ENCODE measurements at regions of chr2 and their contacts with region 1.

Region 1: GRCh38 chr2:72619626-72620025 is 206.2 kb downstream of the EXOC6B start:
- DNase-seq: peak; percentile 67
- H3K4me3 ChIP-seq: no peak overlapping the region
- H3K27ac ChIP-seq: no peak overlapping the region
- H3K4me1 ChIP-seq: no peaks in the 10 kb centered on the region
- H3K27me3 ChIP-seq: no peaks in the 10 kb centered on the region
- CTCF ChIP-seq: no peak

Region 2: DNA sequence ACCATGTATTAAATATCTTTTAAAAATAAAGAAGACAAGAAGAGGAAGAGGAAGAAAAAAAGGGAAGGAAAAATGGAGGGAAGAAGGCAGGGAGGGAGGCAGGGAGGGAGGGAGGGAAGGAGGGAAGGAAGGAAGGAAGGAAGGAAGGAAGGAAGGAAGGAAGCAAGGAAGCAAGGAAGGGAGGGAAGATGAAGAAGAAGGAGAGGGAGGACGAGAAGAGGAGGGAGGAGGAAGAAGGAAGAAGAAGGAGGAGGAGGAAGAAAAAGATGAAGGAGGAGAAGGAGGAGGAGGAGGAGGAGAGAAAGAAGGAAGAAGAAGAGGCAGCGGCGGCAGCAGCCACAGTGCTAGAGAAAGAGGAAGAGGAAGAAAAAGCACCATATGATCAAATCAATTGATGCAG is 16.6 kb after region 1 on chr2:
- CTCF ChIA-PET with region 1: interaction called, 29 read pairs
- dilution Hi-C with region 1: no loop called
- in situ Hi-C with region 1: no loop called
- intact Hi-C with region 1: no loop called
- DNase-seq: no peak
- H3K4me3 ChIP-seq: no peak overlapping the region
- H3K27ac ChIP-seq: no peak overlapping the region
- H3K4me1 ChIP-seq: no peaks in the 10 kb centered on the region
- H3K27me3 ChIP-seq: no peaks in the 10 kb centered on the region
- CTCF ChIP-seq: no peak

Measured in mammary epithelial cell (primary cell).